ENCODE measurements at regions of chr1 and their contacts with region 1.

Region 1: DNA sequence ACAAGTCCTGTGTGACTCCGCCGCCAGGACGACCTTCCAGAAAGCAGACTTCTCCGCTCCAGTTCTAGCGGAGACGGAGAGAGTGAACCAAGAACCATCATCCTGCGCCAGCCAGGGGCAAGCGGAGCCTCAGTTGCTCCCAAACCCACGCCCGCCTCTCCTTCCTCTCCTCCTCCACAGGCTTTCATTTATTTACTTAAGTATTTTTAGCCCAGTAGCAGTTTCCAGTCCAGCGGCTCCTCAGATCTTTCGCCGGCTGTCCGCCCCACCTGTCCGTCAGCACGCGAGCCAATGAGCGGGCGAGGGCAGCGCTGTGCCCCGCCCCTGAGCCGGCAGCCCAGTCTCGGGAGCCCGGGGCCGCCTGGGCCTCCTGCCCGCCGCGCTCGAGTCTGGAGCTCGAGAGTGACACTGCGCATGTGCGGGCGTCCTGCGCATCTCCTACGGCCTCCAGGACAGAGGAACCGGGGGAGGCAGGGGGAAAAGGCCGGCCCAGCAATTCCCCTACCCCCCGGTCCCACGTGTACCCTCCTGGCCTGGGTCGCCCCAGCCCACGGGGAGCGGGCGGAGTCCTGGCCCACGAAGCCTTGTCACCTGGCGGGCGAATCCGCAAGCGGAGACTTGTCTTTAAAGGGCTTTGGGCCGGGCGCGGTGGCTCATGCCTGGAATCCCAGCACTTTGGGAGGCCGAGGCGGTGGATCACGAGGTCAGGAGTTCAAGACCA is at the start of gene FALEC:
- DNase-seq: peak; percentile 95
- ATAC-seq: peak; percentile 99
- H3K4me3 Mint-ChIP-seq: peak within 1 kb of the TSS; percentile 80
- H3K27ac Mint-ChIP-seq: peak within 1 kb of the TSS; percentile 59
- H3K4me1 Mint-ChIP-seq: peaks cover 10% of the 10 kb centered on the region
- H3K27me3 Mint-ChIP-seq: no peaks in the 10 kb centered on the region
- total RNA-seq, gene FALEC: 0.34 TPM in 1 of 2 experiments, not detected in the other

Region 2: DNA sequence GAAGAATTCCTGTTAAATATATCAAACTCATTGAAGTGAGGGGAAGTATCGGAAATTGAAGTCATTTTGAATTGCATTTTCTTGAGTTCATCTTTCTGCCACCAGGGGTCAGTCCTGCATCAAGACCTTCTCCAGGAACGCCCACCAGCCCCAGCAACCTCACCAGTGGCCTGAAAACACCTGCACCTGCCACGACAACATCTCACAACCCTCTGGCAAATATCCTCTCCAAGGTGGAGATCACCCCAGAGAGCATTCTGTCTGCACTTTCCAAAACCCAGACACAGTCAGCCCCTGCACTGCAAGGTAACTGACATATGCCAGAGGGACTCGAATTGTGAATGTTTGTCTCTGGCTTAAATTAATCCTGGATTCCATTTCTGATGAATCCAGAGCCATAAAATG is 51.1 kb before region 1 on chr1:
- CTCF ChIA-PET with region 1: interaction called, 3 read pairs
- POLR2A ChIA-PET with region 1: no interaction called
- intact Hi-C with region 1: loop called in 1 of 2 experiments (anchors 1 kb)
- DNase-seq: peak; percentile 85
- ATAC-seq: peak; percentile 69
- H3K4me3 Mint-ChIP-seq: no peak overlapping the region
- H3K27ac Mint-ChIP-seq: no peak overlapping the region
- H3K4me1 Mint-ChIP-seq: peaks cover 4% of the 10 kb centered on the region
- H3K27me3 Mint-ChIP-seq: no peaks in the 10 kb centered on the region

Region 3: GRCh38 chr1:150477733-150478132 is 37.8 kb before region 1 on chr1:
- CTCF ChIA-PET with region 1: interaction called, 3 read pairs
- POLR2A ChIA-PET with region 1: no interaction called
- intact Hi-C with region 1: loop called in 1 of 2 experiments (anchors 5 kb)
- DNase-seq: no peak
- ATAC-seq: no peak
- H3K4me3 Mint-ChIP-seq: no peak overlapping the region
- H3K27ac Mint-ChIP-seq: no peak overlapping the region
- H3K4me1 Mint-ChIP-seq: peaks cover 10% of the 10 kb centered on the region
- H3K27me3 Mint-ChIP-seq: no peaks in the 10 kb centered on the region

Region 4: DNA sequence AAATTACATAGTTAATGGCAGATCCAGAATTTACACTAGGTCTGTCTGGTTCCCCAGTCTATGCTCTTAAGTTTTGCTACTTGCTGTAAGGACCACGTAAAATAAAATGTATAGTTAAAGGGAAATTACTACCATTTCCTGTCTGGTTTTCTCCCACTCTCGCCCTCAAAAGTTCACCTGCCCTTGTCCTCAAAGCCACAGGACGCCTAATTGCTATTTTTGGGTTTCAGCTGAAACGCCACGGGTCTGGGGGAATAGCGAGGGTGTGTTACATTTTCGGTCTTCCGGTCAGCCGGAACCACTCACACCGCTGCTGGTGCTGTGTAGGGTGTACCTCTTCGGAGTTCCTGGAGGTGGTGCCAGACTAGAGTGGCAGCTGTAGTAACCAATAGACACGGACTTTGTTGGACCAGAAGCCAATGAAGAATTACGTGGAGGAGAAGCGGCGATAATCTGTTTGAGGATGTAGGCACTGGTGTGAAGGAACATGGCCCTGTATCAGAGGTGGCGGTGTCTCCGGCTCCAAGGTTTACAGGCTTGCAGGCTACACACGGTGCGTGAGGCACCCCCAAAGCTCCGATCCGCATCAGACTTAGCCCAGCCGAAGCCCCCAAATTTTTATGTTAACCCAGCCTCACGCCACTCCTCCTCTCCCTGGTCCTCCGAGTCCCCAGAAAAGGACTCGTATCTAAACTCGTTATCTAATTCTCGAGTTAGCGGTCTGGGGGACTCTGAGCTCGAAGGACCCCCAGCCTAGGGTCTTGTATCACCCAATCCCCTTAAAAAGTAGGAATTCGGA is 28.3 kb before region 1 on chr1 and contains the start of gene TARS2:
- CTCF ChIA-PET with region 1: interaction called, 7 read pairs
- POLR2A ChIA-PET with region 1: no interaction called
- intact Hi-C with region 1: loop called in 1 of 2 experiments (anchors 1 kb)
- DNase-seq: peak; percentile 96
- ATAC-seq: peak; percentile 100
- H3K4me3 Mint-ChIP-seq: peak within 1 kb of the TSS; percentile 96
- H3K27ac Mint-ChIP-seq: peak within 1 kb of the TSS; percentile 99
- H3K4me1 Mint-ChIP-seq: peaks cover 13% of the 10 kb centered on the region
- H3K27me3 Mint-ChIP-seq: no peaks in the 10 kb centered on the region
- total RNA-seq, gene TARS2: 43.8 to 58.6 TPM

Region 5: DNA sequence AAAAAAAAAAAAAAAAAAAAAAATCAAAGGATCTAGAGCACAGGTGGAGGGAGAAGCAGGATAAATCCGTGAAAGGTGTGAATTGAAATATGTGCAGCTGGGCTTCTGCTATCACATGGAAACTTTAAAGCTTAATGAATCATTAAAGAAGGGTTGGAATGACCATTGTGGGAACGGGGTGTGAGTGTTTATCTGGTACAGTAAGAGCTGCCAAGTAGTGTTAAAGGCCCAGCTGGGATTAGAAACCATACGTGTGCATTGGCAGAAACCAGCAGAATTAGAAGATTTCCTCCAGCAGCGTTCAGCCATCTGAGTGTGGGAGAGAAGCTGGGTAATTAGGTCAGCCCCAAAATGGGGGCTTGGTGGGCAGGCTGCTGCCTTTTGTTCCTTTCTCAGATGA is 13.5 kb after region 1 on chr1:
- CTCF ChIA-PET with region 1: interaction called, 16 read pairs
- POLR2A ChIA-PET with region 1: no interaction called
- intact Hi-C with region 1: no loop called
- DNase-seq: no peak
- ATAC-seq: no peak
- H3K4me3 Mint-ChIP-seq: no peak overlapping the region
- H3K27ac Mint-ChIP-seq: no peak overlapping the region
- H3K4me1 Mint-ChIP-seq: no peaks in the 10 kb centered on the region
- H3K27me3 Mint-ChIP-seq: no peaks in the 10 kb centered on the region

Region 6: GRCh38 chr1:150548632-150549495 is 33.4 kb after region 1 on chr1 and contains the start of gene ADAMTSL4:
- CTCF ChIA-PET with region 1: interaction called, 4 read pairs
- POLR2A ChIA-PET with region 1: no interaction called
- intact Hi-C with region 1: loop called in 1 of 2 experiments (anchors 2 kb)
- DNase-seq: peak; percentile 67
- ATAC-seq: peak; percentile 82
- H3K4me3 Mint-ChIP-seq: peak within 1 kb of the TSS; percentile 69
- H3K27ac Mint-ChIP-seq: peak within 1 kb of the TSS; percentile 42
- H3K4me1 Mint-ChIP-seq: peaks cover 31% of the 10 kb centered on the region
- H3K27me3 Mint-ChIP-seq: peaks cover 31% of the 10 kb centered on the region
- total RNA-seq, gene ADAMTSL4: 0.28 to 0.59 TPM

Region 7: DNA sequence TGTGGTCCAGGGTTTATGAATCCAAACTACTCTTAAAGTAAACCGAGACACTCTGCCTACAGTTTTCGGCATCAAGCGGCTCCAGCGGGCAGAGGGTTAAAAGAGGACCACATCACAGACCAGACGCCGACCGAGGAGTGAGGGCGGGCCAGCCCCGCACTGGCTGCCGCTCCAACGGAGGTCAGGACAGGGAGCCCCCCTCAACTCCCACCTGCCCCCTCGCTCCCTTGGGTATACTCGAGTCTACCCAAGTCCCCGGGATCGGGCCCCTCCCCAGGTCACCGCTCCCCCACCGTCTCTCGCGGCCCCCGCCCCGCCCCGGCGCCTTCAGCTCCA is 360.6 kb after region 1 on chr1:
- CTCF ChIA-PET with region 1: no interaction called
- POLR2A ChIA-PET with region 1: no interaction called
- intact Hi-C with region 1: loop called in 1 of 2 experiments (anchors 1 kb)
- DNase-seq: no peak
- ATAC-seq: peak; percentile 37
- H3K4me3 Mint-ChIP-seq: peak overlapping the region; percentile 88
- H3K27ac Mint-ChIP-seq: peak overlapping the region; percentile 95
- H3K4me1 Mint-ChIP-seq: peaks cover 25% of the 10 kb centered on the region
- H3K27me3 Mint-ChIP-seq: no peaks in the 10 kb centered on the region

Measured in activated CD4-positive, alpha-beta T cell treated with anti-CD3 and anti-CD28 coated beads for 36 hours (primary cell).